CD8-positive, alpha-beta T cell (primary cell): ENCODE measurements at regions of chr16 and their contacts with region 1.

Region 1: DNA sequence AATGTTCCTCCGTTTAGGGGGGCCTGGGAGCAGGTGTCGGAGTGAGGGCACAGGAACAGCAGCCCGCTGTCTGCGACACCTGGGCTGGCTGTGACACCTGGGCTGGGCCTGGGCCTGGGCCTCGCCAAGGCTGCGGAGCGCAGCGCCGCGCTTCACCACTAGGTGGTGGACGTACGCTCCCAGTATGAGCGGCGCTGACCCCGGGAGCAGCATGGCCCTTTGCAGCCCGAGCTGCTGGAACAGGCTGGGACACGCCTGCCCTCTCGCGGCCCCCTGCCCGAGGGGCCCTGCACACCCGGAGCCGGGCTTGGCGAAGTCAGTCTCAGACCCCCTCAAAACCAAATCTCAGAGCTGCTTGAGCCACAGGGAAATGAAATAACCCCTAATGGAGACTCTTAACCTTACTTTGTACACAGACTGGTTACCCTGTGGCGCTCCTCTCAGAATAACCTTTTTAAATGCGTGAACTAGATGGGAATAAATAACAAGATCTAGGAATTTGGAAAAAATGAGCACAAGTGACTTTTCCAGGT is 38.6 kb upstream of the FA2H start:
- DNase-seq: peak; percentile 44 to 80 (median 66)
- ATAC-seq: peak; percentile 99
- H3K4me3 ChIP-seq: no peak overlapping the region
- H3K4me3 Mint-ChIP-seq: no peak overlapping the region
- H3K27ac ChIP-seq: no peak overlapping the region
- H3K27ac Mint-ChIP-seq: no peak overlapping the region
- H3K4me1 ChIP-seq: peaks cover 3% of the 10 kb centered on the region
- H3K4me1 Mint-ChIP-seq: peaks cover 4% of the 10 kb centered on the region
- H3K27me3 ChIP-seq: no peaks in the 10 kb centered on the region
- H3K27me3 Mint-ChIP-seq: no peaks in the 10 kb centered on the region
- CTCF ChIP-seq: peak; percentile 85

Region 2: DNA sequence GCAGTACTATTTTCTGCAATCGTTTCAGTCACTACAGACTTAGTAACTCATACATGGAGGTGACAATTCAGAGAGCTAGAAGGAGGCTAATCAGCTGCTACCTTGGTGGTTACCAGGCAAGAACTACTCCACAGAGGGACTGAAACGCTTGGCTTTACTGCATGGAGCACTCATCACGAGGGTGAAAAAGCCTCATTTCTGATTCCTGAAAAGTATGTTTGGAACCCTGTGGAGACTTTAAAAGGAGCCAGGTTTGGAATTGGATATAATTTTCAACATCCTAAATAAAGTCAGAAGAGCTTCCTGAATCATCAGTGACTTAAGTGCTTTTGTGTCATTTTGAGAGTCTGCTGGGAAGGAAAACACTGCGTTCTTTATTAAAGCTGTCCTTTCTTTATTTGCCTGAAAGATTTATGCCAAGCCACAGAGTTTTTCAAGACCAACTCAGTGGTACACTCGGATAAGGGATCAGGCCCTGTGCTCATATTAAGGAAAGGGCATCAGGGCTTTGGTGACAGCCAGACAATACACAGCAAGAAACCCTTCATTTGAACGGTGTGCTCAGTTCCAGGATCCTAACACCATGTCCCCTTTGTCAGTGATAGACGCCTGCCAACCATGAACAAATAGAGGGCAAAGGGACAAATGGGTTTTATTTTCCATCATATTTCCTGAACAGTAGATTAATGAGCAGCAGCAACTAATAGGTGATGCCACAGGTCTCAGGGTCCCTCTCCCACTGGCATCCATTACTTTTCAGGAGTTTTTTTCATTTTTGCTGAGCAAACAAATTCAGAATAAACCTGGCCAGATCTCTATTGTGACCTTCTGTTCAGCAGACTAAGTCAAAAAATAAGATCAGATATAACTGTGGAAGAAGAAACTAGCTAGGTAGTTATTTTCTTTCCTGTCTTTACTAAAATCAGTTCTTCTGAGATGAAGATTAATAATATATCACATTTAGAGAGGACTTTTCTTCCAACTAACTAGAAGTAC is 311.4 kb before region 1 on chr16:
- CTCF ChIA-PET with region 1: no interaction called
- POLR2A ChIA-PET with region 1: no interaction called
- intact Hi-C with region 1: no loop called
- DNase-seq: no peak
- ATAC-seq: no peak
- H3K4me3 ChIP-seq: no peak overlapping the region
- H3K4me3 Mint-ChIP-seq: no peak overlapping the region
- H3K27ac ChIP-seq: no peak overlapping the region
- H3K27ac Mint-ChIP-seq: peak overlapping the region; percentile 58
- H3K4me1 ChIP-seq: no peaks in the 10 kb centered on the region
- H3K4me1 Mint-ChIP-seq: peaks cover 21% of the 10 kb centered on the region
- H3K27me3 ChIP-seq: no peaks in the 10 kb centered on the region
- H3K27me3 Mint-ChIP-seq: no peaks in the 10 kb centered on the region
- CTCF ChIP-seq: no peak

Region 3: GRCh38 chr16:74843719-74844433 is 30.7 kb after region 1 on chr16:
- CTCF ChIA-PET with region 1: no interaction called
- POLR2A ChIA-PET with region 1: no interaction called
- intact Hi-C with region 1: no loop called
- DNase-seq: no peak
- ATAC-seq: no peak
- H3K4me3 ChIP-seq: no peak overlapping the region
- H3K4me3 Mint-ChIP-seq: no peak overlapping the region
- H3K27ac ChIP-seq: no peak overlapping the region
- H3K27ac Mint-ChIP-seq: no peak overlapping the region
- H3K4me1 ChIP-seq: no peaks in the 10 kb centered on the region
- H3K4me1 Mint-ChIP-seq: peaks cover 2% of the 10 kb centered on the region
- H3K27me3 ChIP-seq: no peaks in the 10 kb centered on the region
- H3K27me3 Mint-ChIP-seq: peaks cover 4% of the 10 kb centered on the region
- CTCF ChIP-seq: no peak

Region 4: DNA sequence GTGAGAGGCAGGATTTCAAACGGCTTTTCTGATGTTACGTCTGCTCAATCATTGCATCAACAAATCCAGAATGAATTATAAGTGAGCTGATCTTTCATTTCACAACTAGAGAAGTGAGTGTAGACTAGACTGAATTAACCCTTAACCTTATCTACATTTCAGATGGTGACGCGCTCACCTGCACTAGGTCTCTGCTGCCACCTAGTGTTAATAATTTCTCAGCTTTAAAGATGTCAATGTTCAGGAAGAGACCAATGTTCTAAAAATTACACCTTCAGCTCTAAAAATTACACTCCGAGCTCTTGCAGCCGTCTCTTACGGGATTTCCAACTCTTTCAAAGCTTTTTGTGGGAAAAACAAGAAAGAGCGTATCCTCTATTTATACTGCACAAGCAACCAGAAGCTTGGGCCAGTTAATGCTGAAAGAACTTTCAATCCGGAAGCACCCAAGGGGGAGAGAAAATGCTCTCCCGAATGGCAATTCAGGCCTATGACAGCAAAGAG is 49.6 kb after region 1 on chr16:
- CTCF ChIA-PET with region 1: interaction called, 21 read pairs
- POLR2A ChIA-PET with region 1: no interaction called
- intact Hi-C with region 1: no loop called
- DNase-seq: peak in 2 of 9 experiments; percentile 36 to 50
- ATAC-seq: no peak
- H3K4me3 ChIP-seq: no peak overlapping the region
- H3K4me3 Mint-ChIP-seq: no peak overlapping the region
- H3K27ac ChIP-seq: no peak overlapping the region
- H3K27ac Mint-ChIP-seq: no peak overlapping the region
- H3K4me1 ChIP-seq: peaks cover 6% of the 10 kb centered on the region
- H3K4me1 Mint-ChIP-seq: peaks cover 11% of the 10 kb centered on the region
- H3K27me3 ChIP-seq: no peaks in the 10 kb centered on the region
- H3K27me3 Mint-ChIP-seq: no peaks in the 10 kb centered on the region
- CTCF ChIP-seq: peak; percentile 47